Left cardiac atrium (tissue), 4 donors: ENCODE measurements at regions of chr21 and their contacts with region 1.

Region 1: DNA sequence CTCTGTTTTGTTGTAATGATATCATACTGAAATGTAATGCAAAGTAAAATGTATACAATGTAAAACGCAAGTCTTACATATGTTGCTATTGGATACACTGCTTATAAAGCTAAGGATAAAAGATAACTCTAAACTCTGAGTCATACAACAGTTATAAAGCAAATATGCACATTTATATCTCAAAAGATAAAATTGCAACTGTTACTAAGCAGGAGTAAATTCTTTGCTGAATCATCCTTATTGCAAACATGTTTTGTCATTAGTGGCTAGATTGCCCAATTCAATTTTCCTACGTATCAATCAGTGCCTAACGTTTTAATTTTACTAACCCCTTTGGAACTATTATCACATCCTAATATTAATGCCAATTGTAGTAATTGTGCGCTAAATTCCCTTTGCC is 762.9 kb downstream of the LTN1 start:
- DNase-seq: no peak
- ATAC-seq: peak in 1 of 2 donors; percentile 61

Region 2: GRCh38 chr21:28104346-28104745 is 125.5 kb before region 1 on chr21:
- intact Hi-C with region 1: loop called in 1 of 2 experiments (anchors 10 kb)
- DNase-seq: no peak
- ATAC-seq: peak in 1 of 2 donors; percentile 41

Region 3: DNA sequence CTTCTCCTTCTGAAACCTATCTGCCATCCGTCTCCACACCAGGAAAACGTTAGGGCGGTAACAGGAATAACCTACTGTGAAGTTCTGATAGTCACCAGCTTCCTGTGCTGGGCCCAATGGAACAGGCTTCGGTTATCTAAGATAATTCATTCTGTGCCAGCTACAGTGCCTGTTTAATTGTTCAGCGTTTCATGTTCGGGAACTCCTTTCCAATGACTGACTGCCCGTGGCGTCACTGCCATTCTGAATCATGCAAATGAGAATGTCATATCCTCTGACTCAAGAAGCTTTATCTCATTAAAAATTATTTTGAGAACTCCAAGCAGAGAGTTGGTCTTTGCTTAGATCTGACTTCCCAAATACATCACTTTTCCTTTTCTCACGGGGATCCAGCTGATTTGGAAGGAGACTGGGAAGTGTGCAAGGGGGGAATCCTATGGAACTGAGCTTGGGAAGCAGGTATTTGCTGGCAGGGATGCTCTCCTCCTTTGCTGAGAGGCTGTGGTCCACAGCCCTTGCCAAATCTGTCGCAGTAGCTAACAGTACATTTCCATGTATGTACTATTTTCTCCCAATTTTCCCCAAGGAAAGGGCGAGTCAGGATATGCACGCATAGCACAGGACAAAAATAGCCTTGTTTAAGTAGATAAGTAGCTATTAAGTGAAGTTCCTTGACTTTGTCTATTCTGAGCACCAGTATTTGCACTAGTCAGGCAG is 404.2 kb after region 1 on chr21:
- intact Hi-C with region 1: no loop called
- DNase-seq: peak; percentile 81
- ATAC-seq: peak; percentile 58 to 85

Region 4: GRCh38 chr21:28657566-28657965 is 427.8 kb after region 1 on chr21:
- intact Hi-C with region 1: no loop called
- DNase-seq: no peak
- ATAC-seq: no peak